AG04449 (cell line): ENCODE measurements at regions of chr12 and their contacts with region 1.

Region 1: GRCh38 chr12:122190842-122191668 is 8.1 kb downstream of the LRRC43 start:
- DNase-seq: no peak
- H3K4me3 ChIP-seq: no peak overlapping the region
- CTCF ChIP-seq: peak; percentile 80

Region 2: DNA sequence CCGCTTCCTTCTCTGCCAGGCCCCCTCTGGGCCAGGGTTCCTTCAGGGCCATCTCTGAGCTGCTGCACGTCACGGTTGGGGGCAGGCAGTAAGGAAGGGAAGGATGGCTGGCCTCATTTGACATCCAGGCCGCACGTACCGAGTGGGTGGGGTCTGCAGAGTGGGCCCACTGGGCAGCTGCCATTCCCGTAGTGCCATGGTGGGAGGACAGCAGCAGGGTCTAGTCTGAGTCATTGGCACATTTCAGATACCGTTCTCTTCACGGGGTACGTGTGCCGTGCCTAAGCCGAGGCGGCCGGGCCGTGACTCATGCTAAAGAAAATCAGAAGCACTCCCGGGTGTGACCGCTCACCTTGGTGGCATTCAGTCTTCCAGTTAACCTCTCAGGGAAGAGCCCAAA is 60.9 kb before region 1 on chr12:
- CTCF ChIA-PET with region 1: interaction called, 23 read pairs
- POLR2A ChIA-PET with region 1: no interaction called
- DNase-seq: no peak
- H3K4me3 ChIP-seq: no peak overlapping the region
- CTCF ChIP-seq: no peak